ENCODE measurements at regions of chr3 and their contacts with region 1.

Region 1: GRCh38 chr3:127544192-127544802 is 46.2 kb downstream of the TPRA1 start:
- DNase-seq: peak; percentile 16 to 59 (median 43)
- ATAC-seq: peak; percentile 69
- H3K4me3 ChIP-seq: no peak overlapping the region
- H3K4me3 Mint-ChIP-seq: no peak overlapping the region
- H3K27ac ChIP-seq: no peak overlapping the region
- H3K27ac Mint-ChIP-seq: no peak overlapping the region
- H3K4me1 ChIP-seq: peaks cover 0 to 4% of the 10 kb centered on the region in 2 donors
- H3K4me1 Mint-ChIP-seq: peaks cover 4 to 13% (median 12%) of the 10 kb centered on the region in 7 donors
- H3K27me3 ChIP-seq: no peaks in the 10 kb centered on the region
- H3K27me3 Mint-ChIP-seq: peaks cover 0 to 14% (median 0%) of the 10 kb centered on the region in 5 donors

Region 2: DNA sequence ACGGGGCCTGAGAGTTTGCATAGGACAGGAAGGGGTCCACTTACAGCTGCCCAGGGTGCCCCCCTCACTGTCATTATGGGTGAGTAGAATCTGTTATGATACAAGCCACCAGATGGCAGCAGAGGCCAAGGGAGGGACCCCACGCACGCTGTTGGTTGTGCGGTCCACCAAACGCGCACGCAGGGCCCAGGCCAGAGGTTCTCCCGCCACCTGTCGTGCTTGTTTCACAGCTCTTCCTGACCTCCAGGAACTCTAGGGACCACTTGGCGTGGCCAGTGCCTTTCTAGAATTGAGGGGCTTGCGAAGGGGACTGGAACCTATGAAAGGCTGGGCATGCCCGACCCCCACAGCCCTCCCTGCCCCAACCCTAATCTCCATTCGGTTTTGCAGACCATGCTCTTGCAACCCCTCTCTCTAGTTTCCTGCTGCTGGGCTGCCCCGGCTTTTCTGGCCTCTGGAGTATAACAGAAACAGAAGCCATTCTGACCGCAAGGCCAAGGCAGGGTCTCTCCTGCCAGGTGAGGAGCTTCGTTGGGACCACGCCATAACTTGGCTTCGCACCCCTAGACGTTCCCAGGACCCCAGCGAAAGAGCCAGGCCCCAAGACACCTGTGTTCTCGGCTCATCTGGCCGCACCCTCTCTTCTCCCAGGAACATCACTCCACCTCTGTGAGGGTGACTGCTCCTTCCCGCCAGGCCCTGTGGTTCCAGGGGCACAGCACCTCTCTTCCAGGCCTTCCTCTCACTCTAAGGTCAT is 1409.9 kb before region 1 on chr3:
- CTCF ChIA-PET with region 1: no interaction called
- POLR2A ChIA-PET with region 1: no interaction called
- intact Hi-C with region 1: loop called in 1 of 2 experiments (anchors 10 kb)
- DNase-seq: peak in 8 of 9 donors; percentile 15 to 42 (median 35)
- ATAC-seq: peak; percentile 63
- H3K4me3 ChIP-seq: no peak overlapping the region
- H3K4me3 Mint-ChIP-seq: no peak overlapping the region
- H3K27ac ChIP-seq: no peak overlapping the region
- H3K27ac Mint-ChIP-seq: no peak overlapping the region
- H3K4me1 ChIP-seq: no peaks in the 10 kb centered on the region
- H3K4me1 Mint-ChIP-seq: peaks cover 0 to 4% (median 0%) of the 10 kb centered on the region in 7 donors
- H3K27me3 ChIP-seq: no peaks in the 10 kb centered on the region
- H3K27me3 Mint-ChIP-seq: peaks cover 9 to 49% (median 30%) of the 10 kb centered on the region in 5 donors

Region 3: DNA sequence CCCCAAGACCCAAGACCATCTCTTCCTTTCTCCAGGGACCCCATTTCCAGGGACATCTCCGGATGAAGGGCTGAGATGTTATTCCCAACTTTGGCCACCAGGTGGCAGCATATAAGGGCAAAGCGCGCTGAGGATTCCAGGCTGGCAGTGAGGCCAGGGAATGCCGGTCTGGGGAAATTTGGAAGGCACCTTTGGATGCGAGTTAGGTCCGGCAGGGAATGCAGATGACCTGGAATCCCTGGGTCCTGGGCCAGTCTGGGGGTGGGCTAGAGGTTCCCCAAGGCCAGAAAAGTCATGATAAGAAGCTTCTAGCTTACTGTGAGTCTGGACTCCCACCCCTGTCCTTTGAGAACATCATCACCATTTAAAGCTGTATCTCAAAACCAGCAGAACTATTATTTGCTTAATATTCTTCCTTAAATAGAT is 1021.9 kb before region 1 on chr3:
- CTCF ChIA-PET with region 1: interaction called, 14 read pairs
- POLR2A ChIA-PET with region 1: no interaction called
- intact Hi-C with region 1: loop called in 1 of 2 experiments (anchors 5 kb)
- DNase-seq: peak in 8 of 9 donors; percentile 17 to 52 (median 34)
- ATAC-seq: no peak
- H3K4me3 ChIP-seq: no peak overlapping the region
- H3K4me3 Mint-ChIP-seq: no peak overlapping the region
- H3K27ac ChIP-seq: no peak overlapping the region
- H3K27ac Mint-ChIP-seq: no peak overlapping the region
- H3K4me1 ChIP-seq: no peaks in the 10 kb centered on the region
- H3K4me1 Mint-ChIP-seq: peaks cover 0 to 4% (median 0%) of the 10 kb centered on the region in 7 donors
- H3K27me3 ChIP-seq: no peaks in the 10 kb centered on the region
- H3K27me3 Mint-ChIP-seq: peaks cover 12 to 22% (median 21%) of the 10 kb centered on the region in 5 donors

Region 4: DNA sequence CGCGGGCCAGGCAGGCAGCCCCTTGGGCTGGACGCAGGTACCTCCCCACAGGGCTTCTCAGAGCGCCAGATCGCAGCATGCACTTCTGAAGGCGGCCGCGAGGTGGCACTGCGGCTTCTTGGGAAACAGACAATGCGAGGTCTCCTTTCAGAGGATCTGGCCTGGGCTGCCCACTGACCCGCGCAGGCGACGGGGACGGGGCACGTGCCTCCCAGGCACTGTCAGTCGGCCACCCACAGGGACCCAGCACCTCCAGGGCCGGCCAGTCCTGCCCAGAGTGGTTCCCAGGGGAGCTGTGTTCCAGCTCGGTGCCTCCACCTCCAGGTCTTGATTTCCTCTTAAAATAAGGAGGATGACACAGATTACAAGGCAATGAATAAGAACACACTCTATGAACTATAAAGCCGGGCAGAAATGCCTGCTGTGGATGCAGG is 865.0 kb before region 1 on chr3:
- CTCF ChIA-PET with region 1: interaction called, 17 read pairs
- POLR2A ChIA-PET with region 1: no interaction called
- intact Hi-C with region 1: loop called (anchors 1 kb)
- DNase-seq: peak; percentile 46 to 82 (median 66)
- ATAC-seq: peak; percentile 89
- H3K4me3 ChIP-seq: no peak overlapping the region
- H3K4me3 Mint-ChIP-seq: peak overlapping the region in 9 of 10 donors; percentile 43 to 80 (median 72)
- H3K27ac ChIP-seq: no peak overlapping the region
- H3K27ac Mint-ChIP-seq: no peak overlapping the region
- H3K4me1 ChIP-seq: no peaks in the 10 kb centered on the region
- H3K4me1 Mint-ChIP-seq: peaks cover 0 to 5% (median 4%) of the 10 kb centered on the region in 7 donors
- H3K27me3 ChIP-seq: no peaks in the 10 kb centered on the region
- H3K27me3 Mint-ChIP-seq: peaks cover 4 to 12% (median 8%) of the 10 kb centered on the region in 5 donors

Region 5: DNA sequence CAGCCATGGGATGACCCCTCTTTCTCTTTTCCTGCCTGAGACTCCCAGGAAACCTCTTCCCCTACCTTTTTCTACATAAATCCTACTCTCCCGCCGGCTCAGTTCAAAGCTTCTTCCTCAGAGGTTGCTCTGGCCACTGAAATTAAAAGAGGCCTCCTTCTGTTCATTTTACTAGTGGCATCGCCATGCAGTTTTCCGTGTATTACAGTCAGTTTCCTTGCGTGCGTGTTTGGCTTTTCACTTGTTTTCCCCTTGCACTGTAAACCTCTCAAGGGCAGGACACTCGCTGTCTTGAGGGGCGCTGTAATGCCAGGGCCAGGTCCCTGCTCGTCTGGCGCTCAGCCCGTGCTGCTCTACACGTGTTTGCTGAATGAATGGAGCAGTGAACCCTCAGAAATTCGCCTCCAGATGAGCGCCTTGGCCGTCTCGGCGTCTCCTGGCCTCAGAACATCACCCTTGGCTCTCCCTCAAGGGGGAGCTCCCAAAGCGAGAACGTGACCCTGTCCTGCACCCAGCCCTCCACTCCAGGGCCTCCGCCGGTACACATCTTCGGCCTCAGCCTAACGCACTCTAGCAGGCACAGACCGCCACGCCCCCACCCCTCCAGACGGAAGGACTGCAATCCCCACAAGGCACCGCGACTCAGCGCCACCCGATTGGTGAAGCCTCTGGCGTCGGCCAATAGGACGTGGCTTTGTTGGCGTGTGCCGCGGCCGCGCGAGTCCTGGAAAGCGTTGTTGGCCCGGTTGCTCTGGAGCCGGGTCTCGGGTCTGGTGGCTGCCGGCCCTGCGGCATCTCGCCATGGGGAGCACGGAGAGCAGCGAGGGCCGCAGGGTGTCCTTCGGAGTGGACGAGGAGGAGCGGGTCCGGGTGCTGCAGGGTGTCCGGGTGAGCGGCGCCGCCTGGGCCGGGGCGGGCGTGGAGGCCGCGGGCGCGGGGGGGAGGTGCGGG is 840.5 kb before region 1 on chr3 and contains the start of gene CHCHD6:
- CTCF ChIA-PET with region 1: no interaction called
- POLR2A ChIA-PET with region 1: no interaction called
- intact Hi-C with region 1: loop called in 1 of 2 experiments (anchors 1 kb)
- DNase-seq: peak; percentile 92 to 99 (median 96)
- ATAC-seq: peak; percentile 99
- H3K4me3 ChIP-seq: peak within 1 kb of the TSS; percentile 82
- H3K4me3 Mint-ChIP-seq: peak within 1 kb of the TSS; percentile 83 to 99 (median 97)
- H3K27ac ChIP-seq: peak within 1 kb of the TSS; percentile 69
- H3K27ac Mint-ChIP-seq: peak within 1 kb of the TSS; percentile 71 to 98 (median 92)
- H3K4me1 ChIP-seq: peaks cover 6 to 13% of the 10 kb centered on the region in 2 donors
- H3K4me1 Mint-ChIP-seq: peaks cover 17 to 28% (median 21%) of the 10 kb centered on the region in 7 donors
- H3K27me3 ChIP-seq: peaks cover 0 to 5% of the 10 kb centered on the region in 2 donors
- H3K27me3 Mint-ChIP-seq: peaks cover 10 to 42% (median 19%) of the 10 kb centered on the region in 5 donors
- total RNA-seq, gene CHCHD6: 5.4 to 14.0 (median 10.0) TPM

Region 6: DNA sequence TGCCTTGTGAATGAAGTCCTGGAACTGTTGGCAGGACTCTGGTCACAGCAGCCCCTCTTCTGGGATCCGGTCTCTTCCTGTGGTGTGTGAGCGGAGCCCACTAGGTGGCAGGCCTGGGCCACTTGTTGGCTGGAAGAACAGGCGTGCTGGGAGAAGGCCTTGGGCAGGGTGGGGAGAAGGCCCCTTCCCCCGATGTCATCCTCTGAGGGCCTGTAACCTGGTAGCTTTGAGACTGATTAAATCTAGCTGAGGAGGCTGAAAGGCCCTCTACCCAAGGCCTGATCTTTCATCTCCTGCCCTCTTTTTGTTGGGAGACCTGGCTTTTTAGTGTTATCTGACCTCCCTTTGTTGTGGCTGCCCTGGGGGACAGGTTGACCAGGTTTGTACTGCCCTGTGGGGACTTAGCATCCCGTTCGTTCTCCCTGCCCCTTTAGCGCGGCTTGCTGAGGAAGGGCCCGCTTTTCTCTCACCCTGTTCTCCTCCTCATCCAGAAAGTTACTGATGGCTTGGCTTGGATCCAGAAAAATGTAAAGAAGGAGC is 791.9 kb before region 1 on chr3:
- CTCF ChIA-PET with region 1: interaction called, 3 read pairs
- POLR2A ChIA-PET with region 1: no interaction called
- intact Hi-C with region 1: loop called (anchors 1 kb)
- DNase-seq: peak in 7 of 9 donors; percentile 11 to 54 (median 21)
- ATAC-seq: peak; percentile 73
- H3K4me3 ChIP-seq: no peak overlapping the region
- H3K4me3 Mint-ChIP-seq: no peak overlapping the region
- H3K27ac ChIP-seq: no peak overlapping the region
- H3K27ac Mint-ChIP-seq: peak overlapping the region in 1 of 9 donors; percentile 53
- H3K4me1 ChIP-seq: no peaks in the 10 kb centered on the region
- H3K4me1 Mint-ChIP-seq: peaks cover 0 to 12% (median 10%) of the 10 kb centered on the region in 7 donors
- H3K27me3 ChIP-seq: no peaks in the 10 kb centered on the region
- H3K27me3 Mint-ChIP-seq: no peaks in the 10 kb centered on the region

Region 7: DNA sequence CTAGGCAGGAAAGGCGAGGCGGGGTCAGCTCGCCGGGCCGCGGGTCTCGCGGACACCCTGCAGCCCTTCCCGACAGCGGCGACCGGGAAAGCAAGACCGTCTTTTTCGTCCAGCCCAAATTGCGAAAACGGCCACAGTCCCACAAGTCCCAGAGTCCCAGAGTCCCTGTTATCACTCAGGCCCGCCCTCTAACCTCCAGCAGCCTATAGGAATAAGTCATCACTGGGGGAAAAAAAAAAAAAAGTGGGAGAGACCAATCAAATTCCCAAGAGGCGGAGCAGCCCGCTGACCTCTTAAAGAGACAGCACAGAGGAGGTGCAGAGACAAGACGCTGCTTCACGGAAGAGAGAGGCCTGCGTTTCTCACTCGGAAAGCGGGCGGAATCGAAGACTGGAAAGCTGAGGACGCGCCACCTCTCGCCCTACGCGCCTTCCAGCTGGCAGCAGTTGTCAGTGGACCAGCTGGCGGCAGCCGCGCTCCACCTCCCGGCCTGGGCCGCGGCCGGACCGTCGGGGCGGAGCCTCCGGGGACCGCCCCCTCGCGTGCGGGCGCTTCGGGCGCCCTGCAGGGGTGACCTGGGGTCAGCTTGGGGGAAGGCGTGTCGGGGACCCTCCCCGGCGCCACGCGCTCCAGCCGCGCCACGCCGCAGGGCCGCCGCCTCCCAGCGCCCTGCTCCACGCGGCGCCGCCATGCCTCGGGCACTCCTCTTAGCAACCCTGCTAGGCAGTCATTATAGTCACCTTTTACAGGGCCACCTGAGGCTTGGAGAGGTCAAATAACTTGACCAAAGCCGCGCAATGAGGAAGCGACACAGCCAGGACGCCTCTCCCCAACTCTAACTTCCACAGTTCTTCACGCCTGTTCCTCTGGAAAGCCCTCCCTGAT is 46.5 kb after region 1 on chr3 and contains the start of gene TPRA1:
- CTCF ChIA-PET with region 1: no interaction called
- POLR2A ChIA-PET with region 1: no interaction called
- intact Hi-C with region 1: loop called in 1 of 2 experiments (anchors 5 kb)
- DNase-seq: peak; percentile 58 to 90 (median 85)
- ATAC-seq: peak; percentile 90
- H3K4me3 ChIP-seq: peak within 1 kb of the TSS; percentile 91
- H3K4me3 Mint-ChIP-seq: peak within 1 kb of the TSS; percentile 86 to 99 (median 96)
- H3K27ac ChIP-seq: peak within 1 kb of the TSS; percentile 80
- H3K27ac Mint-ChIP-seq: peak within 1 kb of the TSS; percentile 86 to 96 (median 94)
- H3K4me1 ChIP-seq: peaks cover 11 to 12% of the 10 kb centered on the region in 2 donors
- H3K4me1 Mint-ChIP-seq: peaks cover 14 to 51% (median 43%) of the 10 kb centered on the region in 7 donors
- H3K27me3 ChIP-seq: no peaks in the 10 kb centered on the region
- H3K27me3 Mint-ChIP-seq: no peaks in the 10 kb centered on the region
- total RNA-seq, gene TPRA1: 13.6 to 30.6 (median 24.5) TPM

Measured in naive thymus-derived CD4-positive, alpha-beta T cell (primary cell).